SK-N-SH (cell line): ENCODE measurements at regions of chr2 and their contacts with region 1.

Region 1: GRCh38 chr2:44866152-44866551 is 75.3 kb upstream of the SIX3 start:
- DNase-seq: no peak
- H3K4me3 ChIP-seq: no peak overlapping the region
- H3K27ac ChIP-seq: no peak overlapping the region
- H3K4me1 ChIP-seq: no peaks in the 10 kb centered on the region; a peak in 1 of 4 replicates
- H3K27me3 ChIP-seq: no peaks in the 10 kb centered on the region
- CTCF ChIP-seq: no peak
- EP300 ChIP-seq: no peak
- RAD21 ChIP-seq: no peak

Region 2: GRCh38 chr2:44825702-44826101 is 40.5 kb before region 1 on chr2:
- CTCF ChIA-PET with region 1: no interaction called
- POLR2A ChIA-PET with region 1: no interaction called
- DNase-seq: no peak
- H3K4me3 ChIP-seq: no peak overlapping the region
- H3K27ac ChIP-seq: no peak overlapping the region
- H3K4me1 ChIP-seq: peaks cover 0 to 6% of the 10 kb centered on the region in 2 experiments; a peak in 1 of 4 replicates
- H3K27me3 ChIP-seq: peaks cover 24% of the 10 kb centered on the region; the same call in 1 of the 2 replicates
- CTCF ChIP-seq: no peak
- EP300 ChIP-seq: no peak
- RAD21 ChIP-seq: no peak

Region 3: GRCh38 chr2:44879269-44880124 is 13.3 kb after region 1 on chr2:
- CTCF ChIA-PET with region 1: interaction called, 13 read pairs
- POLR2A ChIA-PET with region 1: no interaction called
- DNase-seq: peak; percentile 46
- H3K4me3 ChIP-seq: no peak overlapping the region; a peak in 1 of 4 replicates
- H3K27ac ChIP-seq: no peak overlapping the region
- H3K4me1 ChIP-seq: peaks cover 0 to 20% of the 10 kb centered on the region in 2 experiments; a peak in 2 of 4 replicates
- H3K27me3 ChIP-seq: peaks cover 21% of the 10 kb centered on the region
- CTCF ChIP-seq: no peak
- EP300 ChIP-seq: no peak
- RAD21 ChIP-seq: no peak